ENCODE measurements at regions of chr15 and their contacts with region 1.

Region 1: GRCh38 chr15:33201491-33202231 is 7.1 kb upstream of the FMN1 start:
- DNase-seq: peak; percentile 46
- H3K4me3 Mint-ChIP-seq: peak overlapping the region; percentile 59
- H3K27ac Mint-ChIP-seq: peak overlapping the region; percentile 71
- H3K4me1 Mint-ChIP-seq: peaks cover 35% of the 10 kb centered on the region
- H3K27me3 Mint-ChIP-seq: peaks cover 42% of the 10 kb centered on the region

Region 2: GRCh38 chr15:33104212-33104611 is 97.4 kb before region 1 on chr15:
- intact Hi-C with region 1: loop called (anchors 5 kb)
- DNase-seq: peak; percentile 27
- H3K4me3 Mint-ChIP-seq: no peak overlapping the region
- H3K27ac Mint-ChIP-seq: no peak overlapping the region
- H3K4me1 Mint-ChIP-seq: peaks cover 8% of the 10 kb centered on the region
- H3K27me3 Mint-ChIP-seq: peaks cover 48% of the 10 kb centered on the region

Region 3: GRCh38 chr15:33154351-33155166 is 47.1 kb before region 1 on chr15:
- intact Hi-C with region 1: loop called (anchors 10 kb)
- DNase-seq: no peak
- H3K4me3 Mint-ChIP-seq: no peak overlapping the region
- H3K27ac Mint-ChIP-seq: no peak overlapping the region
- H3K4me1 Mint-ChIP-seq: no peaks in the 10 kb centered on the region
- H3K27me3 Mint-ChIP-seq: peaks cover 54% of the 10 kb centered on the region